PC-9 (cell line): ENCODE measurements at regions of chr3 and their contacts with region 1.

Region 1: GRCh38 chr3:180594631-180595558 is 7.1 kb upstream of the TTC14 start:
- DNase-seq: no peak
- H3K4me3 ChIP-seq: no peak overlapping the region
- H3K27ac ChIP-seq: no peak overlapping the region
- H3K4me1 ChIP-seq: no peaks in the 10 kb centered on the region
- H3K27me3 ChIP-seq: no peaks in the 10 kb centered on the region
- CTCF ChIP-seq: peak; percentile 79

Region 2: GRCh38 chr3:179768080-179768479 is 826.8 kb before region 1 on chr3:
- CTCF ChIA-PET with region 1: interaction called, 3 read pairs
- POLR2A ChIA-PET with region 1: no interaction called
- intact Hi-C with region 1: loop called (anchors 1 kb)
- DNase-seq: peak in 1 of 2 experiments; percentile 36
- H3K4me3 ChIP-seq: no peak overlapping the region
- H3K27ac ChIP-seq: no peak overlapping the region
- H3K4me1 ChIP-seq: no peaks in the 10 kb centered on the region
- H3K27me3 ChIP-seq: no peaks in the 10 kb centered on the region
- CTCF ChIP-seq: peak; percentile 66

Region 3: GRCh38 chr3:179811321-179812095 is 783.4 kb before region 1 on chr3:
- CTCF ChIA-PET with region 1: interaction called, 11 read pairs
- POLR2A ChIA-PET with region 1: no interaction called
- intact Hi-C with region 1: loop called (anchors 2 kb)
- DNase-seq: peak in 1 of 2 experiments; percentile 45
- H3K4me3 ChIP-seq: no peak overlapping the region
- H3K27ac ChIP-seq: no peak overlapping the region
- H3K4me1 ChIP-seq: no peaks in the 10 kb centered on the region
- H3K27me3 ChIP-seq: no peaks in the 10 kb centered on the region
- CTCF ChIP-seq: peak; percentile 71

Region 4: DNA sequence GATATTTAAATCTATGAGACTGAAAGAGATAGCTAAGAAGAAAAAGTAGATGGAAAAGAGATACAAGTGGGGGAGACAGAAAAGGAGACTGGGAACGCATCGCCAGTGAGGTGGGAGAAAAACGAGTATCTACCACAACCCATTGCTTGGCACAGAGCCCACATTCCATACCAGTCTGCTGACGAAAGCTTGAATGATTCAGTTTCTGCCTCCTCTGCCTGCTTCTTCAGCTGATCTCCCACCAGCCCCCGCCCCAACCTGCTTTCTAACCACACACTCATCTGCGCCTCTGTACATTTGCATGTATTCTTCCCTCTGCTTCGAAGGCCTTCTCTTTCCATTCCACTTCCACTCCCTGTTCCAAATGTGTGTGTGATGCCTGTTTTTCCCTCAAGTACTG is 753.9 kb before region 1 on chr3:
- CTCF ChIA-PET with region 1: no interaction called
- POLR2A ChIA-PET with region 1: no interaction called
- intact Hi-C with region 1: no loop called
- DNase-seq: peak in 1 of 2 experiments; percentile 42
- H3K4me3 ChIP-seq: no peak overlapping the region
- H3K27ac ChIP-seq: no peak overlapping the region
- H3K4me1 ChIP-seq: no peaks in the 10 kb centered on the region
- H3K27me3 ChIP-seq: no peaks in the 10 kb centered on the region
- CTCF ChIP-seq: no peak

Region 5: DNA sequence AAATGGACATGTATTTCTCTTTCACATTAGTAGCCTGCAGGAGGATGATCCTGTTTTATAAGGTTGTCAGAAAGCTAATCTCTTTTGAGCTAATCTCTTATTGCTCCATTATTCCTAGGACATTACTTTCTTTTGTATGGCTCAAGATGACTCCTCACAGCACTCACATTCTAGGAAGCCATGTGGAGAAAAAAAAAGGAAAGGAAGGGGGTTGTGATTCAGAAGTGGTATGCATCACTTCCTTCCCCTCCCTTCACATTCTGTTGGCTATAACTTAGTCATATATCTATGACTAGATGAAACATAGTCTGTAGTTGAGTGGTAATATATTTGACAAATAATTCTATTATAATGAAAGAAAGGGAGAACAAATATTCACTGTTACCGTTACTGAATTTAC is 161.7 kb before region 1 on chr3:
- CTCF ChIA-PET with region 1: no interaction called
- POLR2A ChIA-PET with region 1: no interaction called
- intact Hi-C with region 1: no loop called
- DNase-seq: peak in 1 of 2 experiments; percentile 46
- H3K4me3 ChIP-seq: no peak overlapping the region
- H3K27ac ChIP-seq: no peak overlapping the region
- H3K4me1 ChIP-seq: peaks cover 11% of the 10 kb centered on the region; the same call in 1 of the 2 replicates
- H3K27me3 ChIP-seq: no peaks in the 10 kb centered on the region
- CTCF ChIP-seq: no peak